Naive thymus-derived CD4-positive, alpha-beta T cell (primary cell): ENCODE measurements at regions of chr11 and their contacts with region 1.

Region 1: GRCh38 chr11:9015677-9016076 is 11.9 kb upstream of the NRIP3 start:
- DNase-seq: peak; percentile 20 to 59 (median 45)
- ATAC-seq: peak; percentile 82
- H3K4me3 ChIP-seq: no peak overlapping the region
- H3K4me3 Mint-ChIP-seq: no peak overlapping the region
- H3K27ac ChIP-seq: no peak overlapping the region
- H3K27ac Mint-ChIP-seq: no peak overlapping the region
- H3K4me1 ChIP-seq: peaks cover 0 to 9% of the 10 kb centered on the region in 2 donors
- H3K4me1 Mint-ChIP-seq: peaks cover 0 to 28% (median 18%) of the 10 kb centered on the region in 7 donors
- H3K27me3 ChIP-seq: no peaks in the 10 kb centered on the region
- H3K27me3 Mint-ChIP-seq: peaks cover 0 to 20% (median 7%) of the 10 kb centered on the region in 5 donors

Region 2: GRCh38 chr11:8533332-8533731 is 482.3 kb before region 1 on chr11:
- CTCF ChIA-PET with region 1: no interaction called
- POLR2A ChIA-PET with region 1: no interaction called
- intact Hi-C with region 1: no loop called
- DNase-seq: no peak
- ATAC-seq: no peak
- H3K4me3 ChIP-seq: no peak overlapping the region
- H3K4me3 Mint-ChIP-seq: no peak overlapping the region
- H3K27ac ChIP-seq: no peak overlapping the region
- H3K27ac Mint-ChIP-seq: no peak overlapping the region
- H3K4me1 ChIP-seq: no peaks in the 10 kb centered on the region
- H3K4me1 Mint-ChIP-seq: no peaks in the 10 kb centered on the region
- H3K27me3 ChIP-seq: no peaks in the 10 kb centered on the region
- H3K27me3 Mint-ChIP-seq: peaks cover 2 to 28% (median 14%) of the 10 kb centered on the region in 5 donors

Region 3: DNA sequence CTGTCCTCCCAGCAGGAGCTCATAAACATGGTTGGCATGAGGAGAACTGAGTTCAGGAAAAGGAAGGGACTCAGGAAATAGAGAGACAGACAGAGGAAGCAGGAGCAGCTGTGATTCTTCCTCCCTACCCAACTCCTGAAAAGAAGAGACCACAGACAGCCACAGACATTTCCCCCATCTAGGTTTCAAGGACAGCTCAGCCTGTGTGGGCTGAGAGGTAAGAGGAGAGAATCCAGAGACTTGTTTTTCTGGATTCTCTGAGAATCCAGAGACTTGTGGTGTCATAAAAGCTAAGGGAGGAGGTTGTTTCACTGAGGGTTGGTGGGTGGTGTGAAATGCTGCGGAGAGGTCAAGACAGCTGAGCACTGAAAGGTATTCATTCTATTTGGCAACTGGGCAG is 402.6 kb before region 1 on chr11:
- CTCF ChIA-PET with region 1: no interaction called
- POLR2A ChIA-PET with region 1: no interaction called
- intact Hi-C with region 1: no loop called
- DNase-seq: no peak
- ATAC-seq: no peak
- H3K4me3 ChIP-seq: no peak overlapping the region
- H3K4me3 Mint-ChIP-seq: no peak overlapping the region
- H3K27ac ChIP-seq: no peak overlapping the region
- H3K27ac Mint-ChIP-seq: peak overlapping the region in 2 of 9 donors; percentile 63 to 64
- H3K4me1 ChIP-seq: peaks cover 0 to 3% of the 10 kb centered on the region in 2 donors
- H3K4me1 Mint-ChIP-seq: peaks cover 0 to 12% (median 11%) of the 10 kb centered on the region in 7 donors
- H3K27me3 ChIP-seq: no peaks in the 10 kb centered on the region
- H3K27me3 Mint-ChIP-seq: no peaks in the 10 kb centered on the region

Region 4: GRCh38 chr11:8899119-8899753 is 116.4 kb before region 1 on chr11:
- CTCF ChIA-PET with region 1: no interaction called
- POLR2A ChIA-PET with region 1: no interaction called
- intact Hi-C with region 1: no loop called
- DNase-seq: no peak
- ATAC-seq: no peak
- H3K4me3 ChIP-seq: no peak overlapping the region
- H3K4me3 Mint-ChIP-seq: no peak overlapping the region
- H3K27ac ChIP-seq: no peak overlapping the region
- H3K27ac Mint-ChIP-seq: no peak overlapping the region
- H3K4me1 ChIP-seq: no peaks in the 10 kb centered on the region
- H3K4me1 Mint-ChIP-seq: no peaks in the 10 kb centered on the region
- H3K27me3 ChIP-seq: no peaks in the 10 kb centered on the region
- H3K27me3 Mint-ChIP-seq: peaks cover 0 to 12% (median 0%) of the 10 kb centered on the region in 5 donors

Region 5: GRCh38 chr11:10322830-10323792 is 1307.4 kb after region 1 on chr11:
- CTCF ChIA-PET with region 1: no interaction called
- POLR2A ChIA-PET with region 1: no interaction called
- intact Hi-C with region 1: loop called in 1 of 2 experiments (anchors 5 kb)
- DNase-seq: peak in 8 of 9 donors; percentile 10 to 70 (median 48)
- ATAC-seq: peak; percentile 70
- H3K4me3 ChIP-seq: no peak overlapping the region
- H3K4me3 Mint-ChIP-seq: peak overlapping the region in 1 of 10 donors; percentile 26
- H3K27ac ChIP-seq: no peak overlapping the region
- H3K27ac Mint-ChIP-seq: peak overlapping the region in 5 of 9 donors; percentile 16 to 82 (median 55)
- H3K4me1 ChIP-seq: no peaks in the 10 kb centered on the region
- H3K4me1 Mint-ChIP-seq: peaks cover 0 to 11% (median 3%) of the 10 kb centered on the region in 7 donors
- H3K27me3 ChIP-seq: no peaks in the 10 kb centered on the region
- H3K27me3 Mint-ChIP-seq: peaks cover 4 to 20% (median 8%) of the 10 kb centered on the region in 5 donors